ENCODE measurements at regions of chr7 and their contacts with region 1.

Region 1: DNA sequence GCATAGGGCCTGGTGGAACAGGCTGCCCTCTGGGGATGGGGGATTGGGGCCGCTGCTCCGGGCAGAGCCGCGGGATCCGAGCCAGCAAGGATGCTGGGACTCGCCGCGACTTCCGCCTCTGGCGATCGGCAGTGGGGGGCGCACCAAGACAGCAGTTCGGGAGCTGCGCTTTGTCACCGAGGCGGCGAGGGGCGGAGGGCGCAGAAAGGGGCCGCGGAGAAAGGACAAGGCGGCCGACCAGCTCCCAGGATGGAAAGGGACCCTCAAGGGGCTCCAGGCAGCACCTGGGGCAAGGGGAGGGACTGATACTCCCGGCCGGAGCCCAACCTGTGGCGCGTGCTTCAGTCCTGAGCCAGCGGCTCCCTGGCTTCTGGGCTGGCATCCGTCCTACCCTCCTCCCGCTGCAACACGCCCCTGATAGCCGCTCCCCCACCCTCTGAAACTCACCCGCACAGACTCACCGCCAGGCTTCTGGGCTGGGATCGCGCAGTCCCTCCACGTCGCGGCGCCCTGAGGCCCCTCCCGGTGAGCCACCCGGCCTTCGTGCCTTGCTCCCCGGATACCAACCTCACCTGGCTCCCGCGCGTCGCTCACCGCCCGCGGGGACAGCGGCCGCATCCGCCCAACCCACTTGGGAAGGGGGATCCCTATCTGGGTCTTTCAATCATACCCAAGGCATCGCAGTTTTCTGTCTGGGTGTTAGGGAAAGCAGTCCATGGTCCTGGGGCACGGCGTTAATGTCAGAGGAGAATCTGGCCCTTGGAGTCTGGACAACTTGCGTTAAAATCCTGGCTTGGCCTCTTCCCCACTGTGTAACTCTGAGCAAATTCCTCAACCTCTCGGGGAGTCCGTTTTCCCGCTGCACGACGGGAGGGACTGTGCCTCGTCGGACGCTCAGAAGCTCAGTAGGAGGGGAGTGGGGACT is 7.0 kb upstream of the EVX1 start:
- DNase-seq: peak; percentile 81 to 86
- H3K4me3 ChIP-seq: peak overlapping the region; percentile 70
- H3K4me3 Mint-ChIP-seq: peak overlapping the region; percentile 77
- H3K27ac Mint-ChIP-seq: peak overlapping the region; percentile 32
- H3K4me1 ChIP-seq: no peaks in the 10 kb centered on the region; the same call in 1 of the 2 replicates
- H3K4me1 Mint-ChIP-seq: no peaks in the 10 kb centered on the region
- H3K27me3 ChIP-seq: no peaks in the 10 kb centered on the region
- H3K27me3 Mint-ChIP-seq: no peaks in the 10 kb centered on the region
- CTCF ChIP-seq: peak; percentile 69 to 79

Region 2: GRCh38 chr7:27179503-27180430 is 55.9 kb before region 1 on chr7:
- CTCF ChIA-PET with region 1: no interaction called
- POLR2A ChIA-PET with region 1: no interaction called
- intact Hi-C with region 1: no loop called
- DNase-seq: peak; percentile 70 to 84
- H3K4me3 ChIP-seq: peak overlapping the region; percentile 47
- H3K4me3 Mint-ChIP-seq: peak overlapping the region; percentile 74
- H3K27ac Mint-ChIP-seq: peak overlapping the region; percentile 31
- H3K4me1 ChIP-seq: peaks cover 12% of the 10 kb centered on the region
- H3K4me1 Mint-ChIP-seq: peaks cover 3% of the 10 kb centered on the region
- H3K27me3 ChIP-seq: peaks cover 2% of the 10 kb centered on the region; the same call in 1 of the 2 replicates
- H3K27me3 Mint-ChIP-seq: peaks cover 2% of the 10 kb centered on the region
- CTCF ChIP-seq: peak; percentile 92 to 93

Region 3: DNA sequence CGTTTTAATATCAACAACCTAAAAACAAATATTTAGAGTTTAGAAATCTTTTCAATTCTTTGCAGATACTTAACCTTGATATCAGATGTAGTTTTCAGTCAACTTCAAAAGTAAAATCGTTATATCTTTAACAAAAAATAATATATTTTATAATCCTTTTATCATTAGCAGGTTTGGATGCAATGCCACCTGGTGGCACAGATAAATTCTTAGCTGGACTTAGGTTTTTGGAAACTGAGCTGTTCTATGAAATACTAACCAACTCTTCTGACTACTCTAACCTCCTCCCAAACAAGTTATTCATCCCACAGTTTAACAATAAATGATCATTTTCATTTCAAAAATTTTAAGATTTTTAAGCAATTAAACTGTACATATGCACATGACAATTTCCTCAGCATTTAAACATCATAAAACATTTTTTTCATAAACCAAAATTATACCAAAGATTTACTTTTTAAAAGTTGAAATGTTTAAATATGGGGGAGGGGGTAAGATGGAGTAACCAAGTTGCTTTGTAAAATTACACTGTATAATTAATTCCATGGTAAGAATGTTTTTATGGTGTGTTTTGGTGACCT is 370.1 kb after region 1 on chr7:
- CTCF ChIA-PET with region 1: interaction called, 13 read pairs
- POLR2A ChIA-PET with region 1: no interaction called
- intact Hi-C with region 1: no loop called
- DNase-seq: peak in 1 of 2 experiments; percentile 33
- H3K4me3 ChIP-seq: no peak overlapping the region
- H3K4me3 Mint-ChIP-seq: no peak overlapping the region
- H3K27ac Mint-ChIP-seq: peak overlapping the region; percentile 16
- H3K4me1 ChIP-seq: peaks cover 33% of the 10 kb centered on the region
- H3K4me1 Mint-ChIP-seq: no peaks in the 10 kb centered on the region
- H3K27me3 ChIP-seq: no peaks in the 10 kb centered on the region
- H3K27me3 Mint-ChIP-seq: no peaks in the 10 kb centered on the region
- CTCF ChIP-seq: peak; percentile 42 to 52